ENCODE measurements at regions of chr2 and their contacts with region 1.

Region 1: DNA sequence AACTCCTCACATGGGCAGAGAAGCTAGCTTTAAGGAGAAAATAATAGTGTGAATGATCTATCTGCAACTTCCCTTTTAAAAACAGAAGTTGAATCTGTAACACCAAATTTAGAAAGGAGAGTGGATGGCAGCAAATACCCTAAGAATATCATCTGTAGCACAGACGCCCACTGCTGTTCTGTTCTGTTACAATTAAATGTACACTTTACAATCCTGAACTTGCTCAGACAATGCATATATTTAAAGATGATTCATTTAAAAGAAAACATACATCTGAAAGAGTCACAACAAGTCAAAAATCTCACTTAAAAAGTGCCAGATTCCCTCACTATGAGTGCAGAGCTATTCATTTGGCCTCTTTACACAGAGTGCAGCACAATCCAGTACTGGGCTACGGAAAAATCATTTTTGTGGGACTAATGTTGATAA is 8.0 kb upstream of the SERTAD2 start:
- DNase-seq: peak; percentile 67
- ATAC-seq: peak; percentile 46
- H3K4me3 ChIP-seq: peak overlapping the region in 3 of 5 experiments; percentile 7 to 21 (median 10)
- H3K4me3 Mint-ChIP-seq: peak overlapping the region; percentile 58
- H3K27ac ChIP-seq: peak overlapping the region; percentile 37 to 62
- H3K27ac Mint-ChIP-seq: peak overlapping the region; percentile 81
- H3K4me1 ChIP-seq: peaks cover 76 to 82% of the 10 kb centered on the region in 2 donors
- H3K4me1 Mint-ChIP-seq: peaks cover 69% of the 10 kb centered on the region
- H3K27me3 ChIP-seq: no peaks in the 10 kb centered on the region
- H3K27me3 Mint-ChIP-seq: no peaks in the 10 kb centered on the region
- CTCF ChIP-seq: peak; percentile 37

Region 2: GRCh38 chr2:64599469-64599868 is 62.3 kb before region 1 on chr2:
- CTCF ChIA-PET with region 1: no interaction called
- POLR2A ChIA-PET with region 1: no interaction called
- intact Hi-C with region 1: no loop called
- DNase-seq: no peak
- ATAC-seq: no peak
- H3K4me3 ChIP-seq: no peak overlapping the region
- H3K4me3 Mint-ChIP-seq: no peak overlapping the region
- H3K27ac ChIP-seq: no peak overlapping the region
- H3K27ac Mint-ChIP-seq: no peak overlapping the region
- H3K4me1 ChIP-seq: no peaks in the 10 kb centered on the region
- H3K4me1 Mint-ChIP-seq: no peaks in the 10 kb centered on the region
- H3K27me3 ChIP-seq: no peaks in the 10 kb centered on the region
- H3K27me3 Mint-ChIP-seq: no peaks in the 10 kb centered on the region
- CTCF ChIP-seq: no peak

Region 3: GRCh38 chr2:64799592-64800252 is 138.0 kb after region 1 on chr2:
- CTCF ChIA-PET with region 1: no interaction called
- POLR2A ChIA-PET with region 1: interaction called, 10 read pairs
- intact Hi-C with region 1: no loop called
- DNase-seq: no peak
- ATAC-seq: no peak
- H3K4me3 ChIP-seq: no peak overlapping the region
- H3K4me3 Mint-ChIP-seq: no peak overlapping the region
- H3K27ac ChIP-seq: no peak overlapping the region
- H3K27ac Mint-ChIP-seq: no peak overlapping the region
- H3K4me1 ChIP-seq: no peaks in the 10 kb centered on the region
- H3K4me1 Mint-ChIP-seq: no peaks in the 10 kb centered on the region
- H3K27me3 ChIP-seq: no peaks in the 10 kb centered on the region
- H3K27me3 Mint-ChIP-seq: no peaks in the 10 kb centered on the region
- CTCF ChIP-seq: no peak

Measured in B cell (primary cell).